ENCODE measurements at regions of chr13 and their contacts with region 1.

Region 1: GRCh38 chr13:37869756-37870488 is at the start of gene TRPC4:
- DNase-seq: peak; percentile 60
- ATAC-seq: peak; percentile 86
- total RNA-seq, gene TRPC4: 2.6 TPM

Region 2: DNA sequence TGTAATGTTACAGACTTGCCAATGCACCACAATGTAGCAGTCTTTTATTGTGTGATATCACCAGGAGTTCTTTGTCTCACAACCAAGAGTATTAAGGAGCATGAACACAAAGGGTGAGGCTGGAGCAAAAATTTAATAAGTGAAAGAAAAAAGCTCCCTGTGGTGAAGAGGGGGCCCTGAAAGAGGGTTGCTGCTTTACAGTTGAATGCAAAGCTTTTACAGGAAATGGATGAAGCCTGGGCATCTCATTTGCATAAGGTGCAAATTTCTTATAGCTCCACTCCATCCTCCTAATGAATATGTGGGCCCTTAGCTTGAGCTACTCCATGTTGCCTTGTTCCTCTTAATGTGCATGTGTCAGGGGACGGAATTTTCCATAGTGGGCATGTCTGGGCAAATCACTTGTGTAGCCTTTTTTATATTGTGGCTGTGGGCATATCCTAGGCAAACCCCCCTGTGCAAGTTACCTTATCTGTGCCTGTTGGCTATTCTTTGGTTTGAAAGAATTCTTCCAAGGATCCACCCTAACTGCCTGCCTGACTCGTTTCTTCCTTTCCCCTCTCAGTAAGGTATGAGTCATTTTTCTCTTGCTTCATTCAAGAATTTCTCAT is 45.0 kb after region 1 on chr13:
- intact Hi-C with region 1: loop called (anchors 5 kb)
- DNase-seq: no peak
- ATAC-seq: no peak

Region 3: GRCh38 chr13:37934339-37935191 is 64.6 kb after region 1 on chr13:
- intact Hi-C with region 1: loop called (anchors 5 kb)
- DNase-seq: no peak
- ATAC-seq: peak; percentile 81

Region 4: GRCh38 chr13:37978680-37979079 is 108.8 kb after region 1 on chr13:
- intact Hi-C with region 1: no loop called
- DNase-seq: no peak
- ATAC-seq: no peak

Region 5: GRCh38 chr13:38045307-38046048 is 175.6 kb after region 1 on chr13:
- intact Hi-C with region 1: loop called (anchors 10 kb)
- DNase-seq: no peak
- ATAC-seq: no peak

Region 6: DNA sequence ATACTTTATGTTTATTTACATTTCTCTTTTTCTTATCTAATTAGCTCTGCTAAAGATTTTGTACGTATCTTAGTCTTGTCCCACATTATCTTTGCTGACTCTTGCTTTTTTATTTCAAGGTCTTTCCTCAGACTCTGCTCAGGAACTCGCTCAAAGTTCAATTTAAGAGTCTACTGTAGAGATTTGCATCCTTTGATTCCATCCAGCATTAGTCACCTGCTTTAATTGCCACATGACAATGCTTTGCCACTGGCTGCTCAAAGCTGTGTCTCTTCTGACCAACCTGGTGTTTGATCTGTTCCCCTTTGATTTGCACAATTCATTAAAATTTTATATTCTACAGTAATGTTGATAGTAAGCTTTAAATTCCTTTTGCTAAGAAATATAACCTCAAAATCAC is 659.1 kb after region 1 on chr13:
- intact Hi-C with region 1: loop called (anchors 5 kb)
- DNase-seq: no peak
- ATAC-seq: no peak